ENCODE measurements at regions of chr18 and their contacts with region 1.

Region 1: GRCh38 chr18:72056171-72056570 is 488.0 kb downstream of the CBLN2 start:
- DNase-seq: no peak

Region 2: DNA sequence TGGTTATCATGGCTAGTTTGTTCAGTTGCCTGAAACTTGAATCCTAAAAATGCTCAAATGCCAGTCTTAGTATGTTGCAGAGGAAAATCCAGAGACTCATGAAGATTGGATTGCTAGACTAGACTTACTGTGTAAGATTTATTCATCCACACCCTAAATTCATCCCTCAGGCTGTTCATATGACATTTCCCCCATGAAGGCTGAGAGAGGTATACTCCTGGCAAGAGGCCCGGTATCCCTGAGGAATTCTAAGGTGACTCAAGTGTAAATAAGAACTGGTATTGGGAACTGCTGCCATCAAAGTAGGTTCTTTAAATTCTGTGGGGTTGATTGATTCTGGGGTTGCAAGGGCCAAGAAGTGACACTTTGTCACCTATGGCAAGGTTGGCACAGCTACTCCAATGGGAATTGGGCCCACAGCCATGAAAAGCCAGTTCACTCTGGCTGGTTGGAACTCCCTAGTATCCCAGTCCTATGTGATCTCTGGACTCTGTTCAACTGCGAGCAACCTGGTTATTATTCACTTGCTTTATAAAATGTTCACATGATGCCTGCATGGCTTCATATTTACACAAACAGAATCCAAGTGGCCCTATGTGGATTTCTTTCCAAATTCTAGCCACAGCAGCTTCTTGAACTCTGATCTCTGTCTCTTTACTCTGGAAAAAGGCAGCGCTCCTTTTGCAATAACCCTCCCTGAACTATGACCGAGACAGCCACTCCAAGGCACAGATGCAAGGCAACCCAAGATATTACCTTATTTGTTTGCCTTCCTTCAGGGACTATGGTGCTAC is 58.8 kb after region 1 on chr18:
- intact Hi-C with region 1: loop called (anchors 10 kb)
- DNase-seq: no peak

Region 3: DNA sequence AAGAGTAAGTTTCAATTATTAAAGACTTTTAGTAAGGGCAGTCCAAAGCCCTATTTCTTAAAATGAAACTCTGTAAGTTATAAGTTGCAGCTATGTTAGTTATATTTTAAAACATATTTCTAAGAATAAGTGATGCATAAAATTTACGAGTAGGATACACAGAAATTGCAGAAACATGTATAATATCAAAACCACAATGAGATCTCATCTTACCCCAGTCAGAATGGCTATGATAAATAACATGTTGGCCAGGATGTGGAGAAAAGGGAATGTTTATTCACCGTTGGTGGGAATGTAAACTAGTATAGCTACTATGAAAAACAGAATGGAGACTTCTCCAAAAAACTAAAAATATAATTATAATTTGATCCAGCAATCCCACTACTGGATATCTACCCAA is 286.8 kb after region 1 on chr18:
- intact Hi-C with region 1: no loop called
- DNase-seq: no peak

Measured in head of caudate nucleus (tissue), 42 donors.